Testis (tissue), 5 donors: ENCODE measurements at regions of chr18 and their contacts with region 1.

Region 1: DNA sequence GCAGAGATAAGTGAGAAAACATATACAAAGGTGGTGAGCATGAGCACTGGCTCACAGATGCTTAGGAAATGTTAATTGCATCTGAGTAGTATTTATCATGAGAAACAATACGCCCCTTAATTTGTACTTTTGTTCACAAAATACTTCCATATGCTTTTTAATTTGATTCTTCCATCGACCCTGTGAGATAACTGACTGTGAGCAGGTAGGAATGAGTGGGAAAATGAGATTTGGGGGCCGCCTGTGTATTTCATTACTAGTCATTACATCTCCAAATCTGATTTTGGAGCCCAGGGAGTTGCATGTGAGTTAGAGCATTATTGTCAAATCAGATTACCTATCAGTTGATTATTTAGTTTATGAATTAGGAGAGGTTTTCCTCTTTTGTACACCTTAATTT is 36.7 kb upstream of the NPC1 start:
- DNase-seq: no peak
- H3K4me3 ChIP-seq: no peak overlapping the region
- H3K27ac ChIP-seq: no peak overlapping the region
- H3K4me1 ChIP-seq: peaks cover 16% of the 10 kb centered on the region
- H3K27me3 ChIP-seq: no peaks in the 10 kb centered on the region
- CTCF ChIP-seq: no peak
- POLR2A ChIP-seq: no peak

Region 2: GRCh38 chr18:23668731-23669130 is 45.7 kb after region 1 on chr18:
- intact Hi-C with region 1: no loop called
- DNase-seq: no peak
- H3K4me3 ChIP-seq: no peak overlapping the region
- H3K27ac ChIP-seq: no peak overlapping the region
- H3K4me1 ChIP-seq: no peaks in the 10 kb centered on the region
- H3K27me3 ChIP-seq: no peaks in the 10 kb centered on the region
- CTCF ChIP-seq: no peak
- POLR2A ChIP-seq: no peak

Region 3: DNA sequence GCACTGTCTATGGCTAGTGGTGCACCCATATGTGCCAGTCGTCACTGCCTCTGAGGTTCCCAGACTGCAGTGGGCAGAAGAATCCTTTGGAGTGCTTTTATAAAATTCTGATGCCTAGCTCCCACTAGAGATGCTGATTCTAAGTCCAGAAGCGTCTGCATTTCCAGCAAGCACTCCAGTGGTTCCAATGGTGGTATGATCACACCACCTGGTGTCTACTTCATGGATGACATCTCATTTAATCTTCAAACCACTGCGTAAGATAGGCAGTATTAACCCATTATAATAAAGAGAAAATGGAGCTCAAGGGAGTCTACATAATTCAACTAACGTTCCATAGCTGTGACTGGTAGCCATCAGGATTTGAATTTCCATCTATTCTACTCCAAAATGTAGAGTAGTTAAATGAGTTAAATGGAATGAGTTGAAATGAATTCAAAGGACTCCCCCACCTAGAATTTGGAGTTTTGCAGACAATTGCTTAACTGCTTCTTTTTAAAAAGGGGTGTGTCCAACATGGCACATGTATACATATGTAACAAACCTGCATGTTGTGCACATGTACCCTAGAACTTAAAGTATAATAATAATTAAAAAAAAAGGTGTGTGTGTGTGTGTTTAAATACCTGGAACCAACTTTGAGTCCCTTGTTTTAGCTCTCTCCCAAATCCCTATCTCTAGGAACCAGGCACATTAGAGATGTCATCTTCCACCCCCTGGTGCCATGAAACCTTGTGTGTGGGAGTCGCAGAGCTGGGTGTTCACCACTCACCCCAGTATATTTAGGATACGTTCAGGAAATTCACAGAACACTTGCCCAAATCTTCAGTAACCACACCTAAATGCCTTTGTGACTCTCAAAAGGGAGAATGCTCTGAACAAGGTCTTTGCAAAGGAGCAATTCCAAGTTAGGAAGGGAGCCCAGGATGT is 80.3 kb after region 1 on chr18:
- intact Hi-C with region 1: loop called (anchors 5 kb)
- DNase-seq: peak; percentile 31
- H3K4me3 ChIP-seq: no peak overlapping the region
- H3K27ac ChIP-seq: no peak overlapping the region
- H3K4me1 ChIP-seq: no peaks in the 10 kb centered on the region
- H3K27me3 ChIP-seq: no peaks in the 10 kb centered on the region
- CTCF ChIP-seq: peak; percentile 36 to 69 (median 59)
- POLR2A ChIP-seq: no peak